Activated CD4-positive, alpha-beta memory T cell treated with anti-CD3 and anti-CD28 coated beads for 36 hours (primary cell): ENCODE measurements at regions of chr19 and their contacts with region 1.

Region 1: DNA sequence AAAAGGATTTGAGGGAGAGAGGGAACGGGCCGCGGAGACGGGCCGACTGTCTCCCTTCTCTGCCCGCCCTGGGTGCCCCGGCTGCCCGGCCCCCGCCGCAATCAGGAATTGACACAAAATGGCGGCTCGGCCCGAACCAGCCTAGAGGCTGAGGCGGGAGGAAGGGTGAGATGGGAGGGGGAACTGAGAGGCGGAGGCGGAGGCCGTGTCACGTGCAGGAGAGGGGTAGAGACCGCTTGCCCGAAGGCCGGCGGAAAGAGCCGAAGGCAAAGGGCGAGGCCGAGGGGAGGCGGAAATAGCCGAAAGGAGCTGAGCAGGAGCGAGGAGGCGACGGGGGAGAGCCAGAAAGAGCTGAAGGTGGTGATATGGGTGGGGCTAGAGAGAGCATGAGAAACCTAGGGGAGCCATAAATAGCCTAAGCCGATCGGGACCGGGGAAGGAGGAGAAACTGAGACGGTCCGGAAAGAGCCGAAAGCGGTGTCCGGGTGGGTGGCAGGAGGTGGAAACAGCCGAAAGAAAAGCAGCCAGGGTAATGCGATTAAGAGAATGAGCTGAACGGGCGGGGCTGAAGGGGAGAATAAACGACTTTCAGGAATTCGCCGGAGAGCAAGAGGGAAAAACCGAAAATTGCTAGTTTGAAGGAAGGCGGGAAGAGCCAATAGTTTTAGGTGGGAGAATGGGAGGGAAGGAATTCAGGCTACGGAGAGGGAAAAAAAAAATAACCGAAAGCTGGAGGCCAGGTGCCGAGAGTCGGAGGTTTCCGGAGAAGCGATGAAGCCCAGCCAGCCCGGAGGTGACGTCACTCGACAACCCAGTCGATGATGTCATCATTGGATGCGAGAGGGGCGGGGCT is at the start of gene ZC3H4:
- DNase-seq: peak; percentile 100
- H3K4me3 Mint-ChIP-seq: peak within 1 kb of the TSS; percentile 85
- H3K27ac Mint-ChIP-seq: peak within 1 kb of the TSS; percentile 97
- H3K4me1 Mint-ChIP-seq: peaks cover 24% of the 10 kb centered on the region
- H3K27me3 Mint-ChIP-seq: no peaks in the 10 kb centered on the region
- total RNA-seq, gene ZC3H4: 77.1 to 78.6 TPM

Region 2: GRCh38 chr19:46860125-46860845 is 252.9 kb before region 1 on chr19:
- CTCF ChIA-PET with region 1: no interaction called
- POLR2A ChIA-PET with region 1: no interaction called
- intact Hi-C with region 1: loop called (anchors 2 kb)
- DNase-seq: peak; percentile 98
- H3K4me3 Mint-ChIP-seq: peak overlapping the region; percentile 85
- H3K27ac Mint-ChIP-seq: peak overlapping the region; percentile 91
- H3K4me1 Mint-ChIP-seq: peaks cover 17% of the 10 kb centered on the region
- H3K27me3 Mint-ChIP-seq: no peaks in the 10 kb centered on the region

Region 3: DNA sequence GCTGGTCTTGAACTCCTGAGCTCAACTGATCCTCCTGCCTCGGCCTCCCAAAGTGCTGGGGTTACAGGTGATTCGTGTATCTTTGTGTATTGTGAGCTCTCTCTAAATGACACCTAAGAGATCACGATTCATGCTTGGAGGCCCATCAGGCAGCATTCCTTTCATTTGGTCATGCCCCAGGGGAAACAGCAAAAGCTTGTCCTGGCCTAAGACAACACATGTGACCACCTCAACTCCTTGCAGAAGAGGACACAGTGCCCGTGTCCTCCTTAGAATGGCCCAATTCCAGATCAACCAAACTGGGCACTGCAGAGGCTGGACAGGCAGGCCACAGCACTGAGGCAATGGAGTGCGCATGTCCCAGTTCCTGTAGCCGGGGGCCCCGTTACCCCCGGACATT is 32.1 kb before region 1 on chr19:
- CTCF ChIA-PET with region 1: interaction called, 31 read pairs
- POLR2A ChIA-PET with region 1: interaction called, 7 read pairs
- intact Hi-C with region 1: loop called (anchors 2 kb)
- DNase-seq: no peak
- H3K4me3 Mint-ChIP-seq: no peak overlapping the region
- H3K27ac Mint-ChIP-seq: peak overlapping the region; percentile 49
- H3K4me1 Mint-ChIP-seq: no peaks in the 10 kb centered on the region
- H3K27me3 Mint-ChIP-seq: no peaks in the 10 kb centered on the region

Region 4: DNA sequence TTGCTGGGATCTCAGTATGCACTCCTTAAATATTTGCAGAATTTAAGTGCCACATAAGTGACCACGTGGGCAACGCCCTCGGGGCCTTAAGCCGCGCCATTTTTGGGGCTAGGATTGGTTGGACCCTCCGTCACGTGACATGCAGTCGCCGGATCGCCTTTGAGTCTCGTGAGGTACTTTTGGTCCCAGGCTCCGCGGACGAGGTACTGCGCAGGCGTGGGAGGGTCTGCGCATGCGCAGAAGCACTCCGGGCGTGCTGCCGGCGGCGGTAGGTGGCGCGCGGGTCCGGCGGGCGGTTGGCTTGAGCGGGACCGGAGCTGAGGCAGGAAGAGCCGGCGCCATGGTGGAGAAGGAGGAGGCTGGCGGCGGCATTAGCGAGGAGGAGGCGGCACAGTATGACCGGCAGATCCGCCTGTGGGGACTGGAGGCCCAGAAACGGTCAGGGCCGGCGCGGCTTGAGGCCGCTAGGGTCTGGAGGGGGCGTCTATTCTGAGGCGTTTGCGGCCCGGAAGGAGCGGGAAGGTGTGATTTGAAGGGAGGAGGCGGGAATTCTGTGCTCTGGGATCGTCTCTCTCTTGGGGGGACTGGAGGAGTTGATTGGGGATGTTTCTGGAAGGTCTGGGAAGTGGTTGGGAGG is 17.5 kb after region 1 on chr19 and contains the start of gene SAE1:
- CTCF ChIA-PET with region 1: interaction called, 23 read pairs
- POLR2A ChIA-PET with region 1: interaction called, 22 read pairs
- intact Hi-C with region 1: loop called (anchors 1 kb)
- DNase-seq: peak; percentile 97
- H3K4me3 Mint-ChIP-seq: peak within 1 kb of the TSS; percentile 99
- H3K27ac Mint-ChIP-seq: peak within 1 kb of the TSS; percentile 94
- H3K4me1 Mint-ChIP-seq: peaks cover 47% of the 10 kb centered on the region
- H3K27me3 Mint-ChIP-seq: peaks cover 4% of the 10 kb centered on the region
- total RNA-seq, gene SAE1: 154 to 157 TPM

Region 5: DNA sequence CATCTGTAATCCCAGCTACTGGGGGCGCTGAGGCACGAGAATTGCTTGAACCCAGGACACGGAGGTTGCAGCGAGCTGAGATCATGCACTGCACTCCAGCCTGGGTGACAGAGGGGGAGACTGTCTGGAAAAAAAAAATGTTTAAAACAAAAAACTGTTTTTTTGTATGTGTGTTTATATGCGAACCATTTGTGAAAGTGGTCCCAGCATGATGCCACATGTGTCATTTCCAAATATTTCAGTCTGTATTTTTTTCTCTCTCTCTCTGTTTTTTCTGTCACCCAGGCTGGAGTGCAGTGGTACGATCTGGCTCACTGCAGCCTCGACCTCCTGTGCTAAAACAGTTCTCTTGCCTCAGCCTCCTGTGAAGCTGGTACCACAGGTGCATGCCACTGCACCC is 54.8 kb after region 1 on chr19:
- CTCF ChIA-PET with region 1: no interaction called
- POLR2A ChIA-PET with region 1: no interaction called
- intact Hi-C with region 1: no loop called
- DNase-seq: no peak
- H3K4me3 Mint-ChIP-seq: no peak overlapping the region
- H3K27ac Mint-ChIP-seq: no peak overlapping the region
- H3K4me1 Mint-ChIP-seq: peaks cover 6% of the 10 kb centered on the region
- H3K27me3 Mint-ChIP-seq: no peaks in the 10 kb centered on the region

Region 6: GRCh38 chr19:47243776-47244547 is 130.7 kb after region 1 on chr19:
- CTCF ChIA-PET with region 1: interaction called, 12 read pairs
- POLR2A ChIA-PET with region 1: interaction called, 8 read pairs
- intact Hi-C with region 1: no loop called
- DNase-seq: peak; percentile 96
- H3K4me3 Mint-ChIP-seq: peak overlapping the region; percentile 76
- H3K27ac Mint-ChIP-seq: peak overlapping the region; percentile 90
- H3K4me1 Mint-ChIP-seq: peaks cover 25% of the 10 kb centered on the region
- H3K27me3 Mint-ChIP-seq: peaks cover under 1% of the 10 kb centered on the region

Region 7: GRCh38 chr19:47514869-47515588 is 401.8 kb after region 1 on chr19 and contains the start of gene NAPA:
- CTCF ChIA-PET with region 1: no interaction called
- POLR2A ChIA-PET with region 1: no interaction called
- intact Hi-C with region 1: loop called (anchors 1 kb)
- DNase-seq: peak; percentile 100
- H3K4me3 Mint-ChIP-seq: peak within 1 kb of the TSS; percentile 98
- H3K27ac Mint-ChIP-seq: peak within 1 kb of the TSS; percentile 95
- H3K4me1 Mint-ChIP-seq: peaks cover 74% of the 10 kb centered on the region
- H3K27me3 Mint-ChIP-seq: no peaks in the 10 kb centered on the region
- total RNA-seq, gene NAPA: 67.3 to 70.4 TPM